CD8-positive, alpha-beta T cell (primary cell): ENCODE measurements at regions of chr1 and their contacts with region 1.

Region 1: DNA sequence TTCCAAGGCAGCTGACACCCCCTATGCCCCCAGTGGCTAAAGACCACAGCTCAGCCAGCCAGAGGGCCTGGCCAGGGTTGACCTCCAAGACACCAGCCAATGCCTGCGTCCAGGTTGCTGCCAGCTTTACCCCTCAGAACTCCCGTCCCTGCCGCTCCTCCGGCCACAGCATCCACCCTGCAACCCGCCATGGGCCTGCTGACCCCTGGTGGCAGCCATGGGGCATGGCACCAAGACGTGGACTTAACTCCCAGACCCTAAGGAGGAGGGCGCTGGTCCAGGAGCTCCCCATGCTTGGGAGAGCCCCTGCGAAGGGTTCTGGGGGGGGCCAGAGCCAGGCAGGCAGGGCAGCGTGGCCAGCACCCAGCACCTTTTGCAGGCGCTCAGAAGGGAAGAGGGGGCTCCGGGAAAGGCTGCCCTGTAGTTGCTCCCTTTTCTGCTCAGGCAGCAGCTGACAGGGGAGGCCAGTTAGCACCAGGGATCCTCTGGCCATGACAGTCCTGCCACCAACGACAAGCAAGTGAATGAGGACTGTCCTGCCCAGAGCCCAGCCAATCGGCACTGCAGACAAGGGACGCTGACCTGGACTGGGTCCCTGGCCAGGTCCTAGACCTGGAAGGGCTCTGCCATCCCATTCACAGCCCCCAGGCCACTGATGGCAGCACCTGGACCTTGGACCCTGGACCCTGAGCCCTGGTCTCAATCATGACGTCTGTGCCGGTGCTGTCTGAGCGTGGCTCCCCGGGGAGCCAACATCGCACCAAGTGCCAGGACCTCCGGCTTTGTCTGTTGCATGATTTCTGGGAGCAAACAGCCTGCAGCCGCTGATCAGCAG is 246.2 kb downstream of the NPHP4 start:
- DNase-seq: peak; percentile 27 to 76 (median 60)
- ATAC-seq: peak; percentile 42
- H3K4me3 ChIP-seq: no peak overlapping the region
- H3K4me3 Mint-ChIP-seq: no peak overlapping the region
- H3K27ac ChIP-seq: no peak overlapping the region
- H3K27ac Mint-ChIP-seq: no peak overlapping the region
- H3K4me1 ChIP-seq: no peaks in the 10 kb centered on the region
- H3K4me1 Mint-ChIP-seq: peaks cover 2% of the 10 kb centered on the region
- H3K27me3 ChIP-seq: peaks cover 3 to 5% of the 10 kb centered on the region in 2 experiments
- H3K27me3 Mint-ChIP-seq: peaks cover 16% of the 10 kb centered on the region
- CTCF ChIP-seq: peak; percentile 74

Region 2: DNA sequence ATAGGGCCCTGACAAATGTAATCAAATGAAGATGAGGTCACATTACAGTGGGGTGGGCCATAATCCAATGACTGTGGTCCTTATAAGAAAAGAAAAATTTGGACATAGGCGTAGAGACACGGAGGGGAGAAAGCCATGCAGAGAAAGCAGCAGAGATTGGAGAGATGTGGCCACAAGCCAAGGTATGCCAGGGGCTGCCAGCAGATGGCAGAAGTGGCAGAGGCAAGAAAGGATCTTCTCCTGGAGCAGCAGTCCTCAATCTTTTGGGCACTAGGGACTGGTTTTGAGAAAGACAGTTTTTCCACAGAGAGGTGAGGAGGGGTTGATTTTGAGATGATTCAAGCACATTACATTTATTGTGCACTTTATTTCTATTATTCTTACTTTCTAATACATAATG is 108.8 kb before region 1 on chr1:
- CTCF ChIA-PET with region 1: interaction called, 37 read pairs
- POLR2A ChIA-PET with region 1: no interaction called
- intact Hi-C with region 1: loop called in 1 of 2 experiments (anchors 1 kb)
- DNase-seq: peak in 7 of 9 experiments; percentile 2 to 53 (median 31)
- ATAC-seq: no peak
- H3K4me3 ChIP-seq: no peak overlapping the region
- H3K4me3 Mint-ChIP-seq: no peak overlapping the region
- H3K27ac ChIP-seq: no peak overlapping the region
- H3K27ac Mint-ChIP-seq: no peak overlapping the region
- H3K4me1 ChIP-seq: no peaks in the 10 kb centered on the region
- H3K4me1 Mint-ChIP-seq: peaks cover 5% of the 10 kb centered on the region
- H3K27me3 ChIP-seq: no peaks in the 10 kb centered on the region
- H3K27me3 Mint-ChIP-seq: peaks cover 33% of the 10 kb centered on the region
- CTCF ChIP-seq: peak; percentile 29

Region 3: GRCh38 chr1:6099787-6100765 is 354.1 kb after region 1 on chr1:
- CTCF ChIA-PET with region 1: no interaction called
- POLR2A ChIA-PET with region 1: no interaction called
- intact Hi-C with region 1: no loop called
- DNase-seq: peak in 1 of 9 experiments; percentile 30
- ATAC-seq: peak; percentile 26
- H3K4me3 ChIP-seq: no peak overlapping the region
- H3K4me3 Mint-ChIP-seq: no peak overlapping the region
- H3K27ac ChIP-seq: no peak overlapping the region
- H3K27ac Mint-ChIP-seq: peak overlapping the region; percentile 49
- H3K4me1 ChIP-seq: no peaks in the 10 kb centered on the region
- H3K4me1 Mint-ChIP-seq: no peaks in the 10 kb centered on the region
- H3K27me3 ChIP-seq: no peaks in the 10 kb centered on the region
- H3K27me3 Mint-ChIP-seq: peaks cover 2% of the 10 kb centered on the region
- CTCF ChIP-seq: no peak